ENCODE measurements at regions of chr12 and their contacts with region 1.

Region 1: DNA sequence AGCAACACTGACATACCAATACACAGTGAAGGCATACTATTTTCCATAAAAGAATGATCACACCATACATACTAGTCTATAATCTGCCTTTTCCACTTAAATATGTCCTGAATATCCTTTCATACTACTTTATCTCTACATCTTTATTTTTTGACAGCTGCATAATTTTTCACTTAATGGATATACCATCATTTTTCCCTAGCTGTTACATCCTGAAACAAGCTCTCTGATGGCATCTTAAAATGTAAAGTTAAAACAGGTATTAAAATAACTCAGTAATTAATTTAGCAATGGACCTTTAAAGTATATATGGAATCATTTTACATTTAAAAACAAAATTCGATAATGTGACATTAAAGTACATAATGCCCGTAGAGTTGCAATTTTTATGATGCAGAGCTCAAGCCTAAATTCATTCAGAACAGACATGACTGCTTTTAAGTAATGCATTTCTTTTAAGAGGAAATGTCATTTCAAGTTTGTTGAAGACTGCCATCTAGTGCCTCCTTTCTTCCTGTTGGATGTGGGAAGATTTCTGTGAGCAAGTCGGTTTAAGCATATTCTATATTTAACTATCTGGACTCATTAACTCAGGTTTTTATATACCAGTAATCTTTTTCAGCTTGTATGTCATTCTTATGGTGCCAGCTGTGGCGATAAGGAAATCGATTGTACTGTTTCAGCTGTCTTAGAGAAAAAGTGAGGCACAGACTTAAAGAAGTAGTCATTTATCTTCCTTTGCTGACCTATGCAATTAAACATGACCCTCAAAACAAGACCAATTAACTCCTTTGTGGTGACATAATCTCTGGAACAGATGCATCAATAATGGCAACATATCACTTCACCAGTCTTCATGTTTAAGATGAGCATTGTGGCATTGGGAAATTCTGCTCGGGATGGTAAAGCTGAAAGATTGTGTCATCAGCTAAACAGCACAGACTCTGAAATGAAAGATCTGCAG is 20.3 kb downstream of the PRICKLE1 start:
- DNase-seq: no peak

Region 2: DNA sequence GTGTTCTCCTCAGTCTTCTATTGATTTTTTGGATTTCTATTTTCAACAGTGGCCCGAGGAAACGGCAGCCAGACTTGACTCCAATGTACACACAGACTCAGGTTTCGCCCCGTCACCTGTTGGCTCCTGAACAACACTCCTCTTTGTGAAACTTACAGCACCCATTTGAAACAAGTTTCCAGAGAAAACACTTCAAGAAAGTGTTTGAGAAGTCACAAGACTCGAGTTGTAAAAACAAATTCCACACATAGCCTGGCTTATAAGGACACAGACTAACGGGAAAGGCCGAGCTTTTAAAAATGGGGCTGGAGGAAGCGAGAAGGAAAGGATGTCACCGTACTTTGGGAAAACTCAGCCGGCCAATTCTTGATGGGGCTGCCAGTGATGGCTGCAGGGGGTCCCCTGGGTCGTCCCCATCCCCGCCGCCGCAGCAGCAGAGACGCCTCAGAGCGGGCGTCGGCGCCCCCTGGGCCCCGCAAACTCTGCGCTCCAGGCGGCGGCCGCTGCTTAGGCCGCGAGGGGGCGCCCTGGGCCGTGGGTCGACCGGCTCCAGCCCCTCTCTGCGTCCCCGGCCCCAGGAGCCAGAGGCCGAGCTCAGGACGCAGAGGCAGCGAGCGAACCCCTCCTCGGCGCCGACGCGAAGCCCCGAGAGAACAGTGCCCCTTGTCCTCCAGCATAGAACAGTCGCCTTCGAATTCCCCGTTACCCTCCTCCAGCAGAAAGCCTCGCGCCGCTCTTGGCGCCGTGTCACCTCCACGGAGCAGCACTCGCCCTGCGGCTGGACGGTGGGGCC is 86.6 kb before region 1 on chr12:
- CTCF ChIA-PET with region 1: interaction called, 15 read pairs
- POLR2A ChIA-PET with region 1: no interaction called
- DNase-seq: peak; percentile 85

Region 3: GRCh38 chr12:42539696-42540095 is 29.5 kb before region 1 on chr12:
- CTCF ChIA-PET with region 1: no interaction called
- POLR2A ChIA-PET with region 1: no interaction called
- DNase-seq: no peak

Region 4: GRCh38 chr12:42584651-42585111 is 15.4 kb after region 1 on chr12:
- CTCF ChIA-PET with region 1: interaction called, 14 read pairs
- POLR2A ChIA-PET with region 1: interaction called, 3 read pairs
- DNase-seq: no peak

Measured in HEK293T (cell line).